ENCODE measurements at regions of chr11 and their contacts with region 1.

Region 1: GRCh38 chr11:74398244-74399159 is at the start of gene PGM2L1:
- DNase-seq: peak; percentile 93 to 95
- ATAC-seq: peak; percentile 97 to 98 (median 98)
- H3K4me3 ChIP-seq: peak within 1 kb of the TSS; percentile 93
- H3K27ac ChIP-seq: peak within 1 kb of the TSS; percentile 89
- H3K4me1 ChIP-seq: peaks cover 5% of the 10 kb centered on the region
- H3K27me3 ChIP-seq: no peaks in the 10 kb centered on the region
- CTCF ChIP-seq: no peak
- total RNA-seq, gene PGM2L1: 9.1 to 10.9 (median 10.2) TPM

Region 2: DNA sequence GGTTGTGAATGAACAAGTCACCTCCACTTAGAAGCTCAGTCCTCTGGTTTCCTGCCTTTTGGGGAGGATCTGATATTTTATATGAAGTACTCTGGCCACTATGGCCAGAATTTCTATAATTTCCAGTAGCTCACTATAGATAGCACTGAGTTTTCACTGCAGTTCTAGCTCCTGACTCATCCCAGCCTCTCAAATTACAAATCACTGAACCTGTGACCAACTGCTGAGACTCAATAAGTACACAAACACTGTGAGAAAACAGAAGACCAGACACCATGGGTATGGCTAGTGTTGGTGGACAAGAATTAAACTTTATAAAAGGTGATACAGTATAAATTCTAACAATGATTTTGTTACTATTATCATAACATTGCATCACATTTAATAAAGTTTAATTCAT is 342.6 kb before region 1 on chr11:
- intact Hi-C with region 1: no loop called
- DNase-seq: no peak
- ATAC-seq: peak; percentile 86 to 97 (median 92)
- H3K4me3 ChIP-seq: peak overlapping the region; percentile 5
- H3K27ac ChIP-seq: peak overlapping the region; percentile 73
- H3K4me1 ChIP-seq: peaks cover 18% of the 10 kb centered on the region
- H3K27me3 ChIP-seq: no peaks in the 10 kb centered on the region
- CTCF ChIP-seq: no peak

Region 3: DNA sequence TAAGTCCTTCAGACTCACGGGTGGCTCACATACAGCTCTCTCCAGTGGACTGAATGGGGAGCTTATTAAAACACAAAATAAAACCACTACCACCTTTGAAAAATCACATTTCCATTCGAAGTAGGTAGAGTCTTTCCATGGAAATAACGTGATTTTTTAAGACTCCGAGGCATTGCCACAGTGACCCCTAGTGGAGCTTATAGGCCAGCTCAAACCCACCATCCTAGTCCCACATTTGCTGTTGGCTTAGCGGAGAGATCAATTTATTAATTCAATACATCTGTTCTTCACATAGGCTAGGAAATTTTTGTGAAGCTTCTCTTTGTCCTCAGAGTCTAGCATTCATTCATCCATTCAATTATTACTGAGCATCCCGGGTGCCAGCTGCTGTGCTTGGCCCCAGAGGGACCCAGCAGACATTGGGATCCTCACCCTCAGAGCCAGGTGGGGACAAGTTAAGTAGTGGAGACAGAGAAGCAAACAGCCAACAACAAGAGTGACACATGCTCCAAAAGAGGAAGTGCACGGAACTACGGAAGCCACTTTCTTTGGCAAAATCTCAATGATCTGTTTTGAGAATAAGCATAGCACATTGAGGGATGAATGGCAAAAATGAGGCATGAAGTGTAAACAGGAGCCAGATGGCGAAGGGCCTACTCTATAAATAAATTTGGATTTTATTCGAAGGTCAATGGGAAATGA is 76.9 kb before region 1 on chr11:
- intact Hi-C with region 1: loop called in 1 of 2 experiments (anchors 5 kb)
- DNase-seq: no peak
- ATAC-seq: no peak
- H3K4me3 ChIP-seq: no peak overlapping the region
- H3K27ac ChIP-seq: peak overlapping the region; percentile 61
- H3K4me1 ChIP-seq: peaks cover 51% of the 10 kb centered on the region
- H3K27me3 ChIP-seq: no peaks in the 10 kb centered on the region
- CTCF ChIP-seq: peak; percentile 44

Region 4: GRCh38 chr11:74443071-74443864 is 44.8 kb after region 1 on chr11:
- intact Hi-C with region 1: loop called in 1 of 2 experiments (anchors 2 kb)
- DNase-seq: no peak
- ATAC-seq: peak; percentile 60 to 70 (median 62)
- H3K4me3 ChIP-seq: peak overlapping the region; percentile 43
- H3K27ac ChIP-seq: peak overlapping the region; percentile 82
- H3K4me1 ChIP-seq: peaks cover 19% of the 10 kb centered on the region
- H3K27me3 ChIP-seq: no peaks in the 10 kb centered on the region
- CTCF ChIP-seq: peak; percentile 22

Region 5: GRCh38 chr11:74462009-74462408 is 63.5 kb after region 1 on chr11:
- intact Hi-C with region 1: no loop called
- DNase-seq: peak; percentile 80 to 88
- ATAC-seq: peak; percentile 57 to 84 (median 73)
- H3K4me3 ChIP-seq: peak overlapping the region; percentile 40
- H3K27ac ChIP-seq: peak overlapping the region; percentile 19
- H3K4me1 ChIP-seq: peaks cover 17% of the 10 kb centered on the region
- H3K27me3 ChIP-seq: no peaks in the 10 kb centered on the region
- CTCF ChIP-seq: no peak